PC-9 (cell line): ENCODE measurements at regions of chr9 and their contacts with region 1.

Region 1: DNA sequence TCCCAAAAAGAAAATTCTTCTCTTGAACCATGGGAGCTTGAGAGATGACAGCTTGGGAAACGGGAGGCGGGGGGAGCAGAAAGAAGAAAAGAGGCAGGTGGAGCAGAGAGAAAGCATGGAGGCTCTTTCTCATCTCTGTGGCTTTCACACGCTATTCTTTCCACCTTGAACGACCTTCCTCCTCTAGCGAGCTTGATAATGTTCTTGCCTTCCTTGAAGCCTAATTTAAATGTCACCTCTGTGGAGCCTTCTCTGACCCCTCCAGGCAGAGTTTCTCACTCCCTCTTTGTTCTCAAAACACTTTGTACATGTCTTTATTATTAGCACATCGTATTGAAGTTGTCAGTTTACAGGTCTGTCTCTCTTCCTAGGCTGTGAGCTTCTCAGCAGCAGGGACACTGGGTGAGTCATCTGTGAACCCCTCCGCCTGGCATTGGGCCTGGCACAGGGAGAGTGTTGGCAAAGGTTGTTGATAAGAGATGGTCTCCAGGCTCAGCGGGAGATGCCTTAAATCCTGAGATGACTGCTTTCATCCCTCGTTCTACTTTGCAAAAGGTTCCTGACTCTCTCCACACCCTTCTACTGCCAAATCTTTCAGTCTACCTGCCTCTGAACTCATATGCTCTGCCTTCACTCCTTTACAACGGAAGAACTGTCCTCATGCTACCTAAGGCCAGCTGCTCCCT is 14.1 kb upstream of the STRBP start:
- DNase-seq: peak; percentile 66 to 68
- H3K4me3 ChIP-seq: peak overlapping the region; percentile 41
- H3K27ac ChIP-seq: no peak overlapping the region
- H3K4me1 ChIP-seq: peaks cover 18% of the 10 kb centered on the region
- H3K27me3 ChIP-seq: no peaks in the 10 kb centered on the region
- CTCF ChIP-seq: no peak

Region 2: GRCh38 chr9:123102375-123103110 is 180.0 kb before region 1 on chr9:
- CTCF ChIA-PET with region 1: interaction called, 13 read pairs
- POLR2A ChIA-PET with region 1: no interaction called
- intact Hi-C with region 1: no loop called
- DNase-seq: peak in 1 of 2 experiments; percentile 34
- H3K4me3 ChIP-seq: no peak overlapping the region
- H3K27ac ChIP-seq: no peak overlapping the region
- H3K4me1 ChIP-seq: no peaks in the 10 kb centered on the region
- H3K27me3 ChIP-seq: no peaks in the 10 kb centered on the region
- CTCF ChIP-seq: peak; percentile 55